ENCODE measurements at regions of chr12 and their contacts with region 1.

Region 1: GRCh38 chr12:63826006-63826585 is 18.4 kb upstream of the SRGAP1 start:
- DNase-seq: peak; percentile 86
- H3K4me3 ChIP-seq: no peak overlapping the region
- H3K27ac ChIP-seq: no peak overlapping the region
- H3K4me1 ChIP-seq: peaks cover 4% of the 10 kb centered on the region; the same call in 1 of the 2 replicates
- H3K27me3 ChIP-seq: no peaks in the 10 kb centered on the region

Region 2: DNA sequence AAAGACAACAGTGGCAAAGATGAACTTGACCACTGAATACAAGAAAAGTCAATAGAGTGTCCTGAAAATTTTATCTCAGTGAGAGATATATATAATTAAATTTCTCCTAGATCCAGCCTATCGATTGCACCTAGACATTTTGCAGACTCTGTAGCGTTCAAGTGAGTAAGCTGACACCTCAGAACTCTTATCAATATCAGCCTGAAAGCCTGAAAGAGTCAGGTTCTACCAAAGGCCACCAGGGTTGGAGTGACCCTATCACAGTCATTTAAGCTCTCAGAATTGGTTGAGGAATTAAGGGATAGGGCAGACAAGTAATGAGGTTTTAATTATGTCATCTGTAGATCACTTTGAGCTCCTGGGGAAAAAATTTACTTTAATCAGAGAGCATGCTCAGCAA is 193.0 kb after region 1 on chr12:
- in situ Hi-C with region 1: no loop called
- DNase-seq: no peak
- H3K4me3 ChIP-seq: no peak overlapping the region
- H3K27ac ChIP-seq: no peak overlapping the region
- H3K4me1 ChIP-seq: no peaks in the 10 kb centered on the region
- H3K27me3 ChIP-seq: no peaks in the 10 kb centered on the region

Region 3: DNA sequence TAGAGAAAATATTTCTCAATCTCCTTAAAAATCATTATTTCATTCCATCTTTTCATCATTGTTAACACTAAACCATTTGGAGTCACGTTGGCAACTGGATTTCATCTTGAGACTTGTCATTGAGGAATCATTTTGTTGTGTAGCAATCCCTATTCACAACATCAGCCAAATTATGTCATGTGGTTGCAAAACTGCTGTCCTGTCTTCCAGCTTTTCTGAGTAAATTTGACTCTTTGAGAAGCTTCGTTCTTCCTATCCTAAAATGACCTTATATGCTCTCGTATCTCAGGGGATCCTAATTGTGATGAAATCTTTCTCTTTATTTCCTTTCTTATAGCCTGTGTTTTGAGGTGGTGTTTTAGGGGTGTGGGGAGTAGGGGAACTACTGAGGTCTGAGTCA is 426.6 kb after region 1 on chr12:
- in situ Hi-C with region 1: loop called (anchors 5 kb)
- DNase-seq: peak; percentile 91
- H3K4me3 ChIP-seq: peak overlapping the region; percentile 31; the same call in 1 of the 2 replicates
- H3K27ac ChIP-seq: peak overlapping the region; percentile 83
- H3K4me1 ChIP-seq: peaks cover 12% of the 10 kb centered on the region
- H3K27me3 ChIP-seq: no peaks in the 10 kb centered on the region

Region 4: DNA sequence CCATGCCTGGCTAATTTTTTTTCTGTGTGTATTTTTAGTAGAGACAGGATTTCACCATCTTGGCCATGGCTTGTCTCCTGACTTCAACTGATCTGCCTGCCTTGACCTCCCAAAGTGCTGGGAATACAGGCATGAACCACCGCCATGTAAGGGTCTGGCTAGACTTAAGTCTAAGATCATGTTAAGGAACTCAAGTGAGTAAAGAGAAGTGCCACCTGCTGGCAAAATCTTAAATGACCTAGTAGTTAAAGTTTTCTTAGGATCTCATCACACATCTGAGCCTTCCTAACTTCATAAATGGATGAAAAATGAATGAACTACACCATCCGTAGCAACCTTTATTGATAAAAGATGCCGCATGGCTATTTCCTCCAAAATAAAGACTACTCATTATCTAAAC is 566.1 kb after region 1 on chr12:
- in situ Hi-C with region 1: loop called (anchors 10 kb)
- DNase-seq: peak; percentile 68
- H3K4me3 ChIP-seq: no peak overlapping the region
- H3K27ac ChIP-seq: no peak overlapping the region
- H3K4me1 ChIP-seq: no peaks in the 10 kb centered on the region; the same call in 1 of the 2 replicates
- H3K27me3 ChIP-seq: no peaks in the 10 kb centered on the region